AG04450 (cell line): ENCODE measurements at regions of chr5 and their contacts with region 1.

Region 1: DNA sequence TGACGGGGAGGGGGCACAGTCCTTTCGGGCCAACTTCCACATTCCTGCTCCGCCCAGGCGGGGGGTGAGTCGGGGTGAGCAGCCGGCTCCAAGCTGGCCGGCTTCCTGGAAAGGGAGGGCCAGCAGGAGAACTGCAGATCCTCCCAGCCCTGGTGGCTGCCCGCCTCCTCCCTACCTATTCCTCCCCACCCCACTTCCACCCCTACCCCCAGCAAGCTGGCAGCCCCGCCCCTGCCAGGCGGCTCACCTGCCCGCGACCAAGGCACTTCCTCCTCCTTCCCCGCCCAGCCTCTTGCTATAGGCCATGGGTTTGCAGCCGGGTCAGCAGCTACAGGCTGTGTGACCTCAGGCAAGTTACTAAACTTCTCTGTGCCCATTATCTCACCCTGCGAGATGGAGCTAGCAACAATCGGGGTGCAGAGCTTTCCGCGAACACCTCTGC is 5.6 kb upstream of the IRF1 start:
- DNase-seq: no peak
- H3K4me3 ChIP-seq: peak overlapping the region; percentile 74
- H3K27ac ChIP-seq: peak overlapping the region; percentile 97
- H3K27me3 ChIP-seq: no peaks in the 10 kb centered on the region
- CTCF ChIP-seq: no peak

Region 2: DNA sequence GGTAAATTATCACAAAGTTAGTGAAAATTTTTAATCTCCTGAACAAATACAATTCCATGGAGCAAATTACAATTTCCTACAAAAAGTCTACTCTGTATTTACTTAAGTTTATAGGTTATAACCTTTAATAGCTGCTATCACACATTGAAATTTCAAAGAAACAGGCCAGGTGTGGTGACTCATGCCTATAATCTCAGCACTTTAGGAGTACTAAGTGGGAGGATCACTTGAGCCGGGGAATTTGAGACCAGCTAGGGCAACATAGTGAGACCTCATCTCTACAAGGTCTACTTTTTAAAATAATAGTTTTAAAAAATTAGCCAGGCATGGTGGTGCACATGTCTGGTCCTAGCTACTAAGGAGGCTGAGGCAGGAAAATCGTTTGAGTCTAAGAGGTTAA is 1381.5 kb before region 1 on chr5:
- CTCF ChIA-PET with region 1: no interaction called
- POLR2A ChIA-PET with region 1: no interaction called
- DNase-seq: no peak
- H3K4me3 ChIP-seq: no peak overlapping the region
- H3K27ac ChIP-seq: no peak overlapping the region
- H3K27me3 ChIP-seq: no peaks in the 10 kb centered on the region
- CTCF ChIP-seq: no peak

Region 3: GRCh38 chr5:132344775-132345524 is 151.3 kb before region 1 on chr5:
- CTCF ChIA-PET with region 1: no interaction called
- POLR2A ChIA-PET with region 1: no interaction called
- DNase-seq: no peak
- H3K4me3 ChIP-seq: no peak overlapping the region
- H3K27ac ChIP-seq: no peak overlapping the region
- H3K27me3 ChIP-seq: no peaks in the 10 kb centered on the region
- CTCF ChIP-seq: no peak

Region 4: DNA sequence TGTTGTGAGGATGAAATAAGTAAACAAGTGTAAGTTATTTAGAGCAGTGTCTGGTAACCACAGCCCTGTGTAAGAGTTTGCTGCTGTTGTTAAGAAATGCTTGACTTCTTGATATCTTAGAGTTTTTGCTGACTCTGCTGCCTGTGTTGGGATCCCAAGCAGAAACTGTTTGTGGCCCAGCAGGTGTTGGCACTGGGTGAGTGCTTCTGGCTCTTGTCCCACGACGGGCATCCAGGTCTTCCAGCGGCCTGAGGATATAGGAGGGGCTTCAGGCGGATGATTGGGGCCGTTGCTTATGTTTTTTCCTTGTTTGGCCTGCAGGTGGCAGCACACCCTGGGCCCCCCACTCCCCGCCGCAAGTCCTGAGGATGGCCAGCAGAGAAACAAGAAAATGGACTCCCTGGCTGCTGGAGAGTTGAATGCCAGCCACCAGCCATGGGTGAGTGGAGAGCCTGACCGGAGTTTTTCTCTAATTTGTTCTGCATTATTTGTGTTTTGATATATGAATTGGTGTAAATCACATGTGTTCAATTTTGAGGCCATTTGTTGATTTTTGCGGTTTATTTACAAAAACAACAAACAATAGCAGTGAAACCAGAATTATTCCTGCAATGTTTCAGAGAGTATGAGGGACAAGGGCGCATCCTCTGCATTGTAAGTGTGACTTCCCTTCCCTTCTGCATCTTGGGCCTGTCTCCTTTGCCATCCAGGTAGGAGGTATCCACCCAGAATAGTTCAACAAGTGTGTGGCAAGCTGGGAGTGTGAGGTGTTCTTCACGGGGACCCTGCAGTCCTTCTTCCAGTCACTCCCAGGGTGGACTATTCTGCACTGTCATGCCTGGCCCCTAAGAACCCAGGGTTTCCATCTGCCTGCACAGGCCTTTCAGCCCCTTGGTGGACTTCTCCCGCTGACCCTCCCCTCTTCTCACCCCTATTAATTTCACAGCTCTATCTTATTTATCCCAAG is 76.4 kb before region 1 on chr5:
- CTCF ChIA-PET with region 1: interaction called, 10 read pairs
- POLR2A ChIA-PET with region 1: interaction called, 6 read pairs
- DNase-seq: peak; percentile 55
- H3K4me3 ChIP-seq: no peak overlapping the region
- H3K27ac ChIP-seq: no peak overlapping the region
- H3K27me3 ChIP-seq: no peaks in the 10 kb centered on the region
- CTCF ChIP-seq: peak; percentile 88

Region 5: DNA sequence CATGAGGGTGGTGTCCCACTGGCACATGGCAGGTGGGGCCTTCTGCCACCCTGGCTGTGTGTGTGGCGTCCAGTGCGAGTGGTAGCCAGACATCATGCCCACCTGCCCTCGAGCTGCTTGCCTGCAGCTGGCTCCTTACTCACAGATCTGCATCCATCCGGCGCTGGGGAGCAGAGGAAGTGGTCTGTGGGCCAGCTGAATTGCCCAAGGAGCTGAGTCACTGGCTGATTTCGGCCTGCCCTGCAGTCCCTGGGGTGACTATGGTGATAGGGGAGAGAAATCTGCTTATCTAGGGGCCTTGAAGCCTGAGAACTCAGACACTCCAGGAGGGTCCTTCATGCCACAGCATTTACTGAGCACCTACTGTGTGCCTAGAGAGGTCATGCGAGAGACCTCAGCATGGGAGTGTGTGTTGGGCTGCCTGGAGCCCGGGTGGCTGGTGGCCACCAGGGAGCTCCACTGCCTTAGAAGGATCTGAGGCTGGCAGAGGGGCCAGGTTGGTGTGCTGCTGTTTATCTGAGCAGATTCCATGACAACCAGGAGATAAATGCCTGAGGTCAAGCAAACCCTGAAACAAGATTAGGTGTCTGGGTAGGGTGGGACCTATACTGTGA is 69.6 kb before region 1 on chr5:
- CTCF ChIA-PET with region 1: interaction called, 4 read pairs
- POLR2A ChIA-PET with region 1: interaction called, 20 read pairs
- DNase-seq: peak; percentile 80
- H3K4me3 ChIP-seq: 0 out of 2 replicates have a peak overlapping the region, but pooled peaks have one; percentile 13
- H3K27ac ChIP-seq: peak overlapping the region; percentile 98
- H3K27me3 ChIP-seq: no peaks in the 10 kb centered on the region
- CTCF ChIP-seq: peak; percentile 54

Region 6: GRCh38 chr5:132437604-132438266 is 58.5 kb before region 1 on chr5:
- CTCF ChIA-PET with region 1: interaction called, 3 read pairs
- POLR2A ChIA-PET with region 1: interaction called, 16 read pairs
- DNase-seq: peak; percentile 89
- H3K4me3 ChIP-seq: no peak overlapping the region
- H3K27ac ChIP-seq: peak overlapping the region; percentile 88
- H3K27me3 ChIP-seq: no peaks in the 10 kb centered on the region
- CTCF ChIP-seq: no peak

Region 7: GRCh38 chr5:133081703-133082102 is 585.5 kb after region 1 on chr5:
- CTCF ChIA-PET with region 1: no interaction called
- POLR2A ChIA-PET with region 1: no interaction called
- DNase-seq: no peak
- H3K4me3 ChIP-seq: no peak overlapping the region
- H3K27ac ChIP-seq: no peak overlapping the region
- H3K27me3 ChIP-seq: no peaks in the 10 kb centered on the region
- CTCF ChIP-seq: no peak